Cardiac septum (tissue), 1 donor: ENCODE measurements at regions of chr13 and their contacts with region 1.

Region 1: GRCh38 chr13:48000778-48001628 is at the start of gene SUCLA2:
- DNase-seq: peak; percentile 95
- total RNA-seq, gene SUCLA2: 100 TPM

Region 2: GRCh38 chr13:47843005-47843404 is 158.0 kb before region 1 on chr13:
- intact Hi-C with region 1: no loop called
- DNase-seq: no peak

Region 3: GRCh38 chr13:48037346-48038173 is 36.6 kb after region 1 on chr13 and contains the start of gene NUDT15:
- intact Hi-C with region 1: loop called (anchors 5 kb)
- DNase-seq: peak; percentile 97
- total RNA-seq, gene NUDT15: 8.4 TPM

Region 4: GRCh38 chr13:48303359-48304142 is 302.5 kb after region 1 on chr13 and contains the start of gene RB1:
- intact Hi-C with region 1: no loop called
- DNase-seq: peak; percentile 97
- total RNA-seq, gene RB1: 27.6 TPM